Lower leg skin (tissue), 4 donors: ENCODE measurements at regions of chr20 and their contacts with region 1.

Region 1: DNA sequence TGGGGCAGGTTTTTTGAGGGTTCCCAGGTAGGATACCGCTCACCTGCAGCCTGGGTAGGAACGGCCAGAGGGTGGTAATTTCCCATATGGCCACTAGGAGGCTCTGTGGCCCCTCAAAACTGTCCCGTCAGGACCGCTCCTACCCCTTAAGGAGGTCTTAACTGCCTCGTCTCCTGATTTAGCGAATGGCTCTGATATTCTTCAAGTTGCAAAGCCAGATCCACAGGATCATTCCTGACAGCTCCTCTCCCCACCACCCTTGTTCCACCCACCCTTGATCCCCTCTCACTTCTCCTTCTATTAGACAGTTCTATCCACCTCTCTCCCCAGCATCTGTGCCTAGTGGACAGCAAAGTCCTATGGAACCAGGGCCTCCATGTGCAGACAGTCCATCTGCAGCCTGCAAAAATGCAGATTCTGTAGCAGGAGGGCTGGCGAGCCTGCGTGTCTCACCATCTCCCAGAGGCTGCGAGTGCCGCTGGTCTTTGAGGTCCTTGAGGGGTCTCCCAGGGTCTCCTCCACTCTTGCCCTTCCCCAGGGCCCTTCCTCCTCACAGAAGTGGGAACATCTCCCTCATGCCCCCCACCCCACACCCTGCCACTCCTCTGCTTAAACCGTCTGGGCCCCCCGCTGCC is 34.3 kb upstream of the ZBP1 start:
- DNase-seq: peak; percentile 36 to 90
- H3K4me3 ChIP-seq: no peak overlapping the region
- CTCF ChIP-seq: peak in 1 of 3 donors; percentile 59
- POLR2A ChIP-seq: no peak

Region 2: GRCh38 chr20:58109126-58109880 is 454.8 kb after region 1 on chr20:
- intact Hi-C with region 1: loop called (anchors 10 kb)
- DNase-seq: peak; percentile 14 to 84
- H3K4me3 ChIP-seq: no peak overlapping the region
- CTCF ChIP-seq: no peak
- POLR2A ChIP-seq: no peak

Region 3: GRCh38 chr20:58179432-58180099 is 525.1 kb after region 1 on chr20:
- intact Hi-C with region 1: loop called (anchors 1 kb)
- DNase-seq: peak in 1 of 2 donors; percentile 92
- H3K4me3 ChIP-seq: no peak overlapping the region
- CTCF ChIP-seq: peak in 1 of 3 donors; percentile 78
- POLR2A ChIP-seq: no peak

Region 4: GRCh38 chr20:58251921-58252591 is 597.6 kb after region 1 on chr20:
- intact Hi-C with region 1: no loop called
- DNase-seq: no peak
- H3K4me3 ChIP-seq: no peak overlapping the region
- CTCF ChIP-seq: no peak
- POLR2A ChIP-seq: no peak